Prostate gland (tissue), 2 donors: ENCODE measurements at regions of chr12 and their contacts with region 1.

Region 1: DNA sequence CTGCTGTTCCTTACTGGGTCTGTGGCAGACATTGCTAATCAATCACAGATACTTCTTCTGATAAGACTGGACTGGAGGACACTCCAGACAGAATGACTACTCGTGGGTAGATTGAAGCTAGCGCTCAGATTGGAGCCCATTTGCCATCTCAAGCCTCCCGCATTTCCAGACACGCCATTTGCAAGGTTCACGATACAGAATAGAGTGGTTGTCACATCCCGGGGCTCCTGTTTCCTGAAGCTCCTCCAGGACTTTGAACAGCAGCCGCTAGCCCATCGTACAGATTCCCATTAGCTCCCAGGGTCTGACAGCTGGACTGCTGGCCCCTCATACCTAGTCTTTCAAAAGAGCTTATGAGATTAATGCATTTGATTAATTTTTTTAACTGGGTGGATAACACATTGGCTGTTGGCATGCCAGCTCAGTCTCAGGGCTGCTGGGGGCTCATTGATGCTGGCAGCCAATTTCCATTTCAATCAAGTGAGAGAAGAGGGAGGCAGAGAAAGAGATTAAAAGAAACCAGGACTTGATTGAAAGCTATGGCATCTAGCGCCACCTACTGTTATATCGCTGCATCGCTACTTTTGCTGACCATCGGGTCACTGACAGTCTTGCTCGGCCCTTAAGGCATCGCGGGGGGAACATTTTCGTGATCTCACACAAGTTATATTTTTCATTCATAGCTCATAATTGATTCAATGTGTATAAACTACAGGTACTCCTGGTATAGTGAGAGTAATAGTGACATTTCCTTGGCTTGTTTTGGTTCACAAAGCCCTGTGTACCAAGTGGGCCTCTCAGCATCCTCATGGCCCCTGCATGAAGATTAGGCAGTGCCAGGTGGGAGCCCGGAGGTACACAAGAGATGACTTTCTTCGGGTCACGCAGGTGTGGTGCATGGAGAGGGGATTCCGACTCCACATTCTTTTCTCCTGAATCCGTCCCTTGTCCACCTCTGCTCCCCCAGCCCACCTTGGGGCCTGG is 78.6 kb downstream of the CCDC60 start:
- DNase-seq: peak; percentile 47
- H3K4me3 ChIP-seq: no peak overlapping the region
- H3K27ac ChIP-seq: no peak overlapping the region
- H3K4me1 ChIP-seq: no peaks in the 10 kb centered on the region
- H3K27me3 ChIP-seq: no peaks in the 10 kb centered on the region
- CTCF ChIP-seq: peak; percentile 62 to 87 (median 83)
- POLR2A ChIP-seq: no peak

Region 2: DNA sequence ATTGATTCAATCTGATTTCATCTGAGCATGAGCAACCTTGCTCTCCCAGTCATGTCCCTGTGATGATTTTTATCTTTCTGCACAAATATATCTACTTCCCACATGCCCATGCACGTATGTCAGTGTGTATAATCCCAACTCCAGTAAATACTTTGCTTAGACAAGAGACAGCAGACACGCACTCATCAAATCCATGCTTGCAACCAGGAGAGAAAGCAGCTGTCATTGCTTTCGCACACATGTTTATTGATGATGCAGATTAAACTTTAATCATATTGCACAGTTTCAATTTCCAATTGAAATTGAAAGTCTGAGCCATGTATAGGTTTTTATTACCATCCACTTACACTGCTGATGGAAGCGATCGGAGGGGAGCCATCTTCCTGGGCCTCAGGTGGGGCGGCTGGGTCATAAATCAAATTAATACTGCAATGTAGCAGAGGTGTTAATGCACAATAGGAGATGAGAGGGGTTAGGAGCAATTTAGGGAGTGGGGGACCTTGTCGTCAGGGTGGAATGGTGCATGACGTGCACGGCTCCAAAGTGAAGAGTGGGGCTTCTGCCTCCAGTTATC is 500.3 kb before region 1 on chr12:
- intact Hi-C with region 1: no loop called
- DNase-seq: no peak
- H3K4me3 ChIP-seq: no peak overlapping the region
- H3K27ac ChIP-seq: no peak overlapping the region
- H3K4me1 ChIP-seq: no peaks in the 10 kb centered on the region
- H3K27me3 ChIP-seq: no peaks in the 10 kb centered on the region
- CTCF ChIP-seq: no peak
- POLR2A ChIP-seq: no peak

Region 3: DNA sequence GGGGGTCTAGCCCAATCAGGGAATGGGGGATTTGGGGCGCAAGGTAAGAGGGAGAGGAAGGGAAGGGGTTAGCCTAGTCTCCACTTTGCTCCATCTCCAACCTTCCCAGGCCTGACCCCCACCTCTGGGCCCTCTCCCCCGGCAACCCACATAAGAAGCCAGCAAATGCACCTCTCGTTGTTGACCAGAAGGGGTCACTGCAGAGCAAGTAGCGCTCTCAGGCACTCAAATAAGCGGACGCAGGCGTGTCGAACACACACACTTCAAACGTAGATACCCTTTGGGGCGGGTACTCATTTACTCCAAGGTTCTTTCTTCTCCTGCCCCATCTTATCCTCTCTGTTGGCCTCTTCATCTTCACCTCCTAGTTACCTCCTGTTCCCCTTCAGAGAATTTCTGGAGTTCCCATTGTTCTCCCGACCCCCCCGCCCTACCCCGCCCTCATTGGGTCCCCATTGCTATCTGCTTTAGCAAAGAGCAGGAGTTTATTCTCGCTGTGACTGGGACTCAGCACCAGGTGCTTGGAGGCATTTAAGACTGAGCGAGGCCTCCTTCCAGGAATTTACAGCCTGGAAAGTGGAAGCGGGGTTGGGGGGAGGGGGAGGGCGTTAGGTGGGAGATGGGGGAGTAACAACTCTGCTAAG is 433.2 kb before region 1 on chr12:
- intact Hi-C with region 1: loop called (anchors 10 kb)
- DNase-seq: peak; percentile 16
- H3K4me3 ChIP-seq: no peak overlapping the region
- H3K27ac ChIP-seq: no peak overlapping the region
- H3K4me1 ChIP-seq: no peaks in the 10 kb centered on the region
- H3K27me3 ChIP-seq: peaks cover 14% of the 10 kb centered on the region
- CTCF ChIP-seq: peak in 3 of 4 experiments; percentile 45 to 66 (median 55)
- POLR2A ChIP-seq: no peak

Region 4: GRCh38 chr12:119115296-119115905 is 297.7 kb before region 1 on chr12:
- intact Hi-C with region 1: loop called (anchors 2 kb)
- DNase-seq: peak; percentile 20
- H3K4me3 ChIP-seq: no peak overlapping the region
- H3K27ac ChIP-seq: no peak overlapping the region
- H3K4me1 ChIP-seq: no peaks in the 10 kb centered on the region
- H3K27me3 ChIP-seq: no peaks in the 10 kb centered on the region
- CTCF ChIP-seq: peak; percentile 68 to 93 (median 74)
- POLR2A ChIP-seq: no peak

Region 5: DNA sequence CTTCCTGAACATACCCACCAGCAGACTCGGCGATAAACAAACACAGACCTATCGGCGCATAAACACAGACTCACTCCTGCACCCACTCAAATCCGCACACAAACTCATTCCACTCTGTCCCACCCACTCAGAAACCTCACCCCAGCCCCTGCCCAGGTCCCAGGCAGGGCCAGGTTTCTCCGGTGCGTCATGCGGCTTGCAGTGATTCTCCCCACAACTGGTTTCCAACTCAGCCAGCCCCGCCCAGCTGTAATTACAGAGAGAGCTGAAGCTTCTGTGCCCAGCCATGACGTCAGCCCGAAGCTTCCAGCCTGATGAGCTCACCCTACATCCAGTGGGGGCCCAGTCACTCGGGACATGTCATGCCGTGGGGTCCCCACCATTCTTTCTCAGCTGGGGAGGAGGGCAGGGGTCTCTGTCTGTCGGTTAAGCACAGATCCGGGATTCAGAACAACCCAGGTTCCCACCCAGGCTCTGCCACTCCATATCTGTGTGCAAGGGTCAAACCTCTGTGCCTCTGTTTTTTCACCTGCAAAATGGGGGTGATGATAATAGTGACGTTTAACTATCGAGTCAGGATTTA is 236.7 kb before region 1 on chr12:
- intact Hi-C with region 1: loop called (anchors 5 kb)
- DNase-seq: peak; percentile 83
- H3K4me3 ChIP-seq: peak overlapping the region in 1 of 2 donors; percentile 8
- H3K27ac ChIP-seq: peak overlapping the region; percentile 66 to 87
- H3K4me1 ChIP-seq: peaks cover 2% of the 10 kb centered on the region
- H3K27me3 ChIP-seq: no peaks in the 10 kb centered on the region
- CTCF ChIP-seq: no peak
- POLR2A ChIP-seq: peak; percentile 40

Region 6: GRCh38 chr12:119314290-119314689 is 98.8 kb before region 1 on chr12:
- intact Hi-C with region 1: loop called (anchors 5 kb)
- DNase-seq: no peak
- H3K4me3 ChIP-seq: no peak overlapping the region
- H3K27ac ChIP-seq: no peak overlapping the region
- H3K4me1 ChIP-seq: no peaks in the 10 kb centered on the region
- H3K27me3 ChIP-seq: no peaks in the 10 kb centered on the region
- CTCF ChIP-seq: no peak
- POLR2A ChIP-seq: no peak

Region 7: DNA sequence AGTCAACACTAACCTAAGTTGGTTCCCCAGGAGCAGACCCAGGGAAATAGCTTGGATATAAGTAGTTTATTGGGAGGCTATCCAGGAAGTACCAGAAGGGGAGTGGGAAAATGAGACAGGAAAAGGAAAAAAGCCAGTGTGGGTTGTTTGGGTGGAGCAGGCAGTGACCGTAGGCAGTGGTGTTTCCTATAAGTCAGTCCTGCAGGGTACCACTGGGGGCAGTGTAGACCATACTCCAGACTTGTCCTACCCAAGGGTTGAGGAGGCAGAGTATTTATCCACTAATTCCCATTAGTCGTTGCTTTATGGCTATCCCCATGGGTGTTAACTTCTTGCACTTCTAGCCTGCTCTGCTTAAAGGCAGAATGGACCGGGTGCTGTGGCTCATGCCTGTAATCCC is 85.0 kb before region 1 on chr12:
- intact Hi-C with region 1: loop called (anchors 5 kb)
- DNase-seq: no peak
- H3K4me3 ChIP-seq: no peak overlapping the region
- H3K27ac ChIP-seq: no peak overlapping the region
- H3K4me1 ChIP-seq: no peaks in the 10 kb centered on the region
- H3K27me3 ChIP-seq: no peaks in the 10 kb centered on the region
- CTCF ChIP-seq: peak in 2 of 4 experiments; percentile 9 to 21
- POLR2A ChIP-seq: no peak

Region 8: DNA sequence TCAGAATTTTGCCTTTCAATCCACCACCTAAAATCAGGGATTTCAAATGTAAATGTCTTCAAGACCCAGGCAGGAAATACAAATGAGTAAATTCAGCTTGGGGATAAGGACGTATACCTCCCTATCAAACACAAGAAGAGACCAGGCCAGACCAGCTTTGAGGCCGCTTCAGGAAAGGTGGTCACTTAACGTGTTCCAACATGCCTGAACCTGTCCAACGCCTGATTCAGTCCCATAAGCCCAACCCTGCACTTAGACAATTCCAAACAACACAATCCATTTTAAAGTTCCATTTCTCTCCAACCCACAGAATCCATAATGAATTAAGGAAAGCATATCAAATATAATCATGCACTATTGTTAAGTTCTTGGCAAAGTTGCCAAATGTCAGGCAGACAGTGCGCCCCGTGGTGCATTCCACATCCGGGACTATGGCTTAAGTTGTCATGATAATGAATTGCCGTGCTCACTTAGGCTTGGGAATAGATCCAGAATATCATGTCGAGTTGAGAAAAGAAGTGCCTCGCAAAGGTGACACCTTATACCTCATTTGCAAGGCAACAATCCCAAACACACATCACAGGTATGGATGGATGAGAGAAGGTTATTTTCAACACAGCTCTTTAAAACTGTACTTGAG is 43.1 kb before region 1 on chr12:
- intact Hi-C with region 1: loop called (anchors 5 kb)
- DNase-seq: peak; percentile 39
- H3K4me3 ChIP-seq: no peak overlapping the region
- H3K27ac ChIP-seq: peak overlapping the region; percentile 47 to 65
- H3K4me1 ChIP-seq: no peaks in the 10 kb centered on the region
- H3K27me3 ChIP-seq: no peaks in the 10 kb centered on the region
- CTCF ChIP-seq: no peak
- POLR2A ChIP-seq: no peak